IMR-90 (cell line): ENCODE measurements at regions of chr7 and their contacts with region 1.

Region 1: DNA sequence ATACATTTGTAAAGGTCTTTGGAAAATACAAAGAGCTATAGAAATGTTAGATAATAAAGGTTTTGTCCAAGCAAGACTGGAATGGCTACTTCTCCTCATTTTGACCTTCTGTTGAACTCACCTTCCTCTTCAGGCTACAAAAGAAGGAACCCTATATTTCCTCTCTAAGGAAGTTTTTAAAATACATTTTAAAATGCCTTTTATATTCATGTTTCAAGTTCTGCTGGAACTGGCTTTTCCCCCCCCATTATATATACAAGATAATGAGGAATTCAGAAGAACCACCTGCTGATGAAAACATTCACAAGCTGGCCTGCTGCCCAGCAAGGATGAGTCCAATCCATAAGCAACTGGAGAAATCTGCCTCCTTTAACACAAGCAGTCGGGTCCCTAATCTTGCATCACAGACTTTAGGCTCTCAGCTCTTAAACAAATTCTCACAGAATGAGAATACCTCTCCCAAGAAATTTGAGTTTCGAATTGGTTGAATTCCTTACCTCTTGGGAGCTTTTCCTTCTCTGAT is 44.6 kb downstream of the MTERF1 start:
- DNase-seq: peak; percentile 81
- ATAC-seq: peak; percentile 69
- H3K4me3 ChIP-seq: no peak overlapping the region
- H3K27ac ChIP-seq: no peak overlapping the region
- H3K4me1 ChIP-seq: no peaks in the 10 kb centered on the region
- H3K27me3 ChIP-seq: no peaks in the 10 kb centered on the region
- CTCF ChIP-seq: no peak
- POLR2A ChIP-seq: no peak
- RAD21 ChIP-seq: no peak

Region 2: DNA sequence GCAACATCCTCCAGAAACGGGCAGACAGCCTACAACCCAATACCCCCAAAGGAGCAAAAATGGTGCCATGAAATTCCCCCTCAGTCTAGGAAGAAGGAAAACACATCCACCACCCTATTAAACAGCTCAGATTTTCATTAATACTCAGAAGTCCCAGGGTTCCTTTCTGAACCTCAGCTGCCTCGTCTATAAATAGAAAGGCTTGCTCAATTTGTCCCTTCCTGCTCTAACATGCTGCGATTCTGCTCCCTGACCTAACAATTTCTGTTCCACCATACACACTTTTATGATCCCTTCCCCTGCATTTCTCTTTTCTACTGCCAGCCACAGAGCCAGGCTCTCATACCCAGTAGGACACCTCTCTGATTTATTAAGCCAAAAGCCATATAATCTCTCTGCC is 23.5 kb before region 1 on chr7:
- CTCF ChIA-PET with region 1: interaction called, 10 read pairs
- POLR2A ChIA-PET with region 1: no interaction called
- dilution Hi-C with region 1: no loop called
- in situ Hi-C with region 1: no loop called
- intact Hi-C with region 1: no loop called
- DNase-seq: no peak
- ATAC-seq: no peak
- H3K4me3 ChIP-seq: no peak overlapping the region
- H3K27ac ChIP-seq: no peak overlapping the region
- H3K4me1 ChIP-seq: no peaks in the 10 kb centered on the region
- H3K27me3 ChIP-seq: no peaks in the 10 kb centered on the region
- CTCF ChIP-seq: no peak
- POLR2A ChIP-seq: no peak
- RAD21 ChIP-seq: no peak

Region 3: GRCh38 chr7:91940572-91941341 is 104.8 kb after region 1 on chr7 and contains the start of gene AKAP9:
- CTCF ChIA-PET with region 1: interaction called, 3 read pairs
- POLR2A ChIA-PET with region 1: no interaction called
- dilution Hi-C with region 1: no loop called
- in situ Hi-C with region 1: no loop called
- intact Hi-C with region 1: loop called (anchors 5 kb)
- DNase-seq: peak; percentile 57
- ATAC-seq: peak; percentile 86
- H3K4me3 ChIP-seq: peak within 1 kb of the TSS; percentile 80
- H3K27ac ChIP-seq: peak within 1 kb of the TSS; percentile 98
- H3K4me1 ChIP-seq: peaks cover 2% of the 10 kb centered on the region; the same call in 1 of the 2 replicates
- H3K27me3 ChIP-seq: no peaks in the 10 kb centered on the region
- CTCF ChIP-seq: no peak
- POLR2A ChIP-seq: peak; percentile 70; the same call in 1 of the 2 replicates
- RAD21 ChIP-seq: no peak
- total RNA-seq, gene AKAP9: 25.3 and 49.4 TPM in 2 replicates

Region 4: GRCh38 chr7:92043637-92044036 is 207.7 kb after region 1 on chr7:
- CTCF ChIA-PET with region 1: no interaction called
- POLR2A ChIA-PET with region 1: no interaction called
- dilution Hi-C with region 1: no loop called
- in situ Hi-C with region 1: no loop called
- intact Hi-C with region 1: loop called (anchors 5 kb)
- DNase-seq: no peak
- ATAC-seq: peak; percentile 27; the same call in 1 of the 2 replicates
- H3K4me3 ChIP-seq: no peak overlapping the region
- H3K27ac ChIP-seq: no peak overlapping the region; the same call in 1 of the 2 replicates
- H3K4me1 ChIP-seq: 0 out of 2 replicates have a peak, but pooled peaks cover 2% of the 10 kb centered on the region
- H3K27me3 ChIP-seq: no peaks in the 10 kb centered on the region
- CTCF ChIP-seq: no peak
- POLR2A ChIP-seq: no peak
- RAD21 ChIP-seq: no peak

Region 5: GRCh38 chr7:92131764-92132330 is 295.9 kb after region 1 on chr7:
- CTCF ChIA-PET with region 1: no interaction called
- POLR2A ChIA-PET with region 1: no interaction called
- dilution Hi-C with region 1: no loop called
- in situ Hi-C with region 1: no loop called
- intact Hi-C with region 1: no loop called
- DNase-seq: no peak
- ATAC-seq: no peak
- H3K4me3 ChIP-seq: no peak overlapping the region
- H3K27ac ChIP-seq: no peak overlapping the region
- H3K4me1 ChIP-seq: no peaks in the 10 kb centered on the region
- H3K27me3 ChIP-seq: no peaks in the 10 kb centered on the region
- CTCF ChIP-seq: no peak
- POLR2A ChIP-seq: no peak
- RAD21 ChIP-seq: no peak